Calu3 (cell line): ENCODE measurements at regions of chr1 and their contacts with region 1.

Region 1: GRCh38 chr1:1906185-1907097 is 8.6 kb upstream of the CALML6 start:
- DNase-seq: peak; percentile 81
- H3K4me3 Mint-ChIP-seq: peak overlapping the region; percentile 15
- H3K27ac Mint-ChIP-seq: peak overlapping the region; percentile 17
- H3K4me1 Mint-ChIP-seq: peaks cover 5% of the 10 kb centered on the region
- H3K27me3 Mint-ChIP-seq: no peaks in the 10 kb centered on the region
- CTCF ChIP-seq: peak; percentile 62

Region 2: DNA sequence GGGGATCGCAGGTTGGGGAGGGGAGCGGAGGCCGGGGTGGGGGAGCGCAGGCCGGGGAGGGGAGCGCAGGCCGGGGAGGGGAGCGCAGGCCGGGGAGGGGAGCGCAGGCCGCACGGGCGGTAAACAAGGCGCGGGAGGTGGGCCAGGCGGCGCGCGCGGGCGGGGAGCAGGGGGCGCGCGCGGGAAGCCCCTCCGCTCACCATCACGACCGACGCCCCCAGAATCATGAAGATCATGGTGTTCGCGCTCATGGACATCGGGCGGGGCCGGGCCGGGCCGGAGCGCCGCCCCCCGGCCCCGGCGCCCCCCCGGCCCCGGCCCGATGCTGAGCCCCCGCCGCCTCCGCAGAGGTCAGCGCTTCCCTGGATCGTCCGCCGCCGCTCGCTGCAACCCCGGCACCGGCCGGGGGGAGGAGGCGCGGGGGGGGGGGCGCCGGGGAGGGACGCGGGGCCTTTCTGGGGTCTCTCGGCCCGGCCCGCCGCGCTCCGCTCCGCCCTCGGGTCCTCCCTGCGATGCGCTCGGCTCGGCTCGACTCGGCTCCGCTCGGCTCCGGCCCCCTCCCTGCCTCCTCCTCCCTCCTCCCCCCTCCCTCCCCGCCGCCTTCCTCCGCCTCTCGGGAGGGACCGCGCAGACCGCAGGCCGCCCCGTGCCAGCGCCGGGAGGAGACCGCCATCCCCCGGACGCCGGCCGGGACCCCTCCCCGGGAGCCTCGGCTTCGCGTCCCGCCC is 366.2 kb before region 1 on chr1 and contains the start of gene TMEM240:
- CTCF ChIA-PET with region 1: no interaction called
- intact Hi-C with region 1: no loop called
- DNase-seq: no peak
- H3K4me3 Mint-ChIP-seq: no peak within 1 kb of the TSS
- H3K27ac Mint-ChIP-seq: no peak within 1 kb of the TSS
- H3K4me1 Mint-ChIP-seq: no peaks in the 10 kb centered on the region
- H3K27me3 Mint-ChIP-seq: no peaks in the 10 kb centered on the region
- CTCF ChIP-seq: no peak
- total RNA-seq, gene TMEM240: 5.0 and 5.1 TPM in 2 replicates

Region 3: GRCh38 chr1:1779706-1780597 is 126.5 kb before region 1 on chr1:
- CTCF ChIA-PET with region 1: interaction called, 8 read pairs
- intact Hi-C with region 1: loop called (anchors 10 kb)
- DNase-seq: peak; percentile 30
- H3K4me3 Mint-ChIP-seq: peak overlapping the region; percentile 77
- H3K27ac Mint-ChIP-seq: peak overlapping the region; percentile 36
- H3K4me1 Mint-ChIP-seq: peaks cover 39% of the 10 kb centered on the region
- H3K27me3 Mint-ChIP-seq: no peaks in the 10 kb centered on the region
- CTCF ChIP-seq: no peak

Region 4: GRCh38 chr1:1890506-1891348 is 15.7 kb before region 1 on chr1 and contains the start of gene GNB1:
- CTCF ChIA-PET with region 1: no interaction called
- intact Hi-C with region 1: no loop called
- DNase-seq: peak; percentile 86
- H3K4me3 Mint-ChIP-seq: peak within 1 kb of the TSS; percentile 79
- H3K27ac Mint-ChIP-seq: peak within 1 kb of the TSS; percentile 45
- H3K4me1 Mint-ChIP-seq: peaks cover 18% of the 10 kb centered on the region
- H3K27me3 Mint-ChIP-seq: no peaks in the 10 kb centered on the region
- CTCF ChIP-seq: no peak
- total RNA-seq, gene GNB1: 251 and 252 TPM in 2 replicates